Activated CD4-positive, alpha-beta memory T cell treated with anti-CD3 and anti-CD28 coated beads for 36 hours (primary cell): ENCODE measurements at regions of chr2 and their contacts with region 1.

Region 1: GRCh38 chr2:28894470-28895177 is at the start of gene WDR43:
- DNase-seq: peak; percentile 98
- H3K4me3 Mint-ChIP-seq: peak within 1 kb of the TSS; percentile 93
- H3K27ac Mint-ChIP-seq: peak within 1 kb of the TSS; percentile 94
- H3K4me1 Mint-ChIP-seq: peaks cover 34% of the 10 kb centered on the region
- H3K27me3 Mint-ChIP-seq: no peaks in the 10 kb centered on the region
- total RNA-seq, gene WDR43: 72.7 to 84.8 TPM

Region 2: DNA sequence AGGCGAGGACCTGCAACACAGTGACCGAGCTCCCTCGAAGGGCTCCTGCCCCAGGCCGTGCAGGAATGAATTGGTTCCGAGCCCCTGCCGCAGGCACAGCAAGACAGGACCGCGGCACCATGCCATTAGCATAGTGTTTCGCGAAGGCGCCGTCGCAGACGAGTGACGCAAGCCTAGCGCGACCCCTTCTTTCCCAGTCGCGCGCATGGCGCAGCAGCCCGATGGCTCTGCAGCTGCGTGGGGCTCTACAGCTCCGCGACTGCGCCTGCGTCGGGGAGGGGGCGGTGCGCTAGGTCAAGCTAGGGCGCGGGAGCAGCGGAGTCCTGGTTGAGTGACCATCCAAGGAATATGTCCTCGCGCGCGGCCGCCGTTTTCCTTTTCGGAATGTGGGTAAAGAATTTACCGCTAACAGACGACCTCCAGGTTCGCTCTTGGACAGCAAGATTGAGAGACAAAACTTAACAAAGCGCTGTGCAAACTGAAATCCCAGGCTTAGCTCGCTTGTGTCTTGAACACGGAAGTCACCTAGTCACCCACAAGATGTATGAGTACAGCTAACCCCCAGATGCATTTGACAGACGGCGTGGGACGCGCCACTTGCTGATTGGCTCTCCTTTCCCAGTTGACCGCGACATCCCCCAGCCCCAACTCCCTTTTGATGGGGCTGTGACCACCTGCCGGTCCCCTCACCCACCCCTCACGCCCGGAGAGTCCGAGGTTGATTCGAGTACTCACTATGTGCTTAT is 24.3 kb before region 1 on chr2 and contains the start of gene TRMT61B:
- CTCF ChIA-PET with region 1: interaction called, 6 read pairs
- POLR2A ChIA-PET with region 1: interaction called, 37 read pairs
- intact Hi-C with region 1: loop called (anchors 1 kb)
- DNase-seq: peak; percentile 98
- H3K4me3 Mint-ChIP-seq: peak within 1 kb of the TSS; percentile 93
- H3K27ac Mint-ChIP-seq: peak within 1 kb of the TSS; percentile 89
- H3K4me1 Mint-ChIP-seq: peaks cover 29% of the 10 kb centered on the region
- H3K27me3 Mint-ChIP-seq: no peaks in the 10 kb centered on the region
- total RNA-seq, gene TRMT61B: 16.7 to 18.1 TPM

Region 3: DNA sequence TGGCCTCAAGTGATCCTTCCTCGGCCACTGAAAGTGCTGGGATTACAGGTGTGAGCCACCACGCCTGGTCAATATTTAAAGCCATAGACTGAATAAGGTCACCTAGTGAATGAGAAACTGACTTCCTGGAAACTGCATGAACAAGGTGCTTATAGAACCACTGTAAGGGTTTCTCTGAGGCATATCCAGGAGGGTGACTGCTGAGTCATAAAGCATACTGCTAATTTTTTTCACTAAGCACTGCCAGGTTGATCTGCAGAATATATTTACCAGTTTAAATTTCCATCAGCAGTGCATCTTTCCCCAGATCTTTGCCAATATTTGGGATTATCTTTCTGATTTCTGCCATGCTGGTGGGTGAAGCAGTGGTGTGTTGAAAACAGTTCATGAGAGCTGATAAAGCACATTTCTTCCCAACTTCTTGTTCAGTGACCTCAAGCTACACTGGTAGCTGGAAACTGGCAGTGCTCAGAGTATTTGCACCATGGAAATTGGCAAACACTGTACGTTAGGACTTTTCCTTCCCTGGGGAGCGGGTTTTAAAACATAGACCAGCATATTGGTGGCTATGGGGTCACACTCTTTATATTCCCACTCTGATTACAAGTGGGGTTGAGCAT is 216.4 kb after region 1 on chr2:
- CTCF ChIA-PET with region 1: no interaction called
- POLR2A ChIA-PET with region 1: no interaction called
- intact Hi-C with region 1: loop called (anchors 1 kb)
- DNase-seq: peak; percentile 20
- H3K4me3 Mint-ChIP-seq: no peak overlapping the region
- H3K27ac Mint-ChIP-seq: no peak overlapping the region
- H3K4me1 Mint-ChIP-seq: peaks cover 18% of the 10 kb centered on the region
- H3K27me3 Mint-ChIP-seq: peaks cover 1% of the 10 kb centered on the region